B cell (primary cell): ENCODE measurements at regions of chr4 and their contacts with region 1.

Region 1: GRCh38 chr4:48008021-48008596 is 8.4 kb downstream of the CNGA1 start:
- DNase-seq: no peak
- ATAC-seq: no peak
- H3K4me3 ChIP-seq: no peak overlapping the region
- H3K4me3 Mint-ChIP-seq: no peak overlapping the region
- H3K27ac ChIP-seq: no peak overlapping the region
- H3K27ac Mint-ChIP-seq: no peak overlapping the region
- H3K4me1 ChIP-seq: no peaks in the 10 kb centered on the region
- H3K4me1 Mint-ChIP-seq: no peaks in the 10 kb centered on the region
- H3K27me3 ChIP-seq: peaks cover 0 to 8% (median 4%) of the 10 kb centered on the region in 4 experiments
- H3K27me3 Mint-ChIP-seq: peaks cover 17% of the 10 kb centered on the region
- CTCF ChIP-seq: no peak

Region 2: DNA sequence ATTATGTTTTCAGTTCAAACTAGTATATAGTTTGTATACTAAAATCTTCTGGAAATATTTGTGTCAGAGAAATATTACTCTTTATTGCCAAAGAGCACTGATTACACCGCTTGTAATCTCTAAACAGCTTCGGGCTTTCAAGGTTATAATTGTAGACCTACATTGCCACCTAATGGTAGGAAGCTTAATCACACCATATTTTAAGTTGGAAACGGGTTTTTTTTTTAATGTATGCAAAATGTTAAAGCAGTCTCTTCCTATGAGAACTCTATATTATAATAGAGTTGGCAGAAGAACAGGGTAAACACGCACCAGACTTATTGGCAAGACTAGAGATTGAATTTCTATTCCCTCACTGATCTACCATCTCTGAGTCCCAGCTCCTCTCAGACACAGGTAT is 74.3 kb before region 1 on chr4:
- CTCF ChIA-PET with region 1: no interaction called
- POLR2A ChIA-PET with region 1: no interaction called
- intact Hi-C with region 1: no loop called
- DNase-seq: peak; percentile 66
- ATAC-seq: peak; percentile 61
- H3K4me3 ChIP-seq: no peak overlapping the region
- H3K4me3 Mint-ChIP-seq: no peak overlapping the region
- H3K27ac ChIP-seq: no peak overlapping the region
- H3K27ac Mint-ChIP-seq: no peak overlapping the region
- H3K4me1 ChIP-seq: peaks cover 0 to 7% of the 10 kb centered on the region in 2 donors
- H3K4me1 Mint-ChIP-seq: peaks cover 8% of the 10 kb centered on the region
- H3K27me3 ChIP-seq: peaks cover 0 to 7% (median 0%) of the 10 kb centered on the region in 4 experiments
- H3K27me3 Mint-ChIP-seq: peaks cover 15% of the 10 kb centered on the region
- CTCF ChIP-seq: peak; percentile 87

Region 3: DNA sequence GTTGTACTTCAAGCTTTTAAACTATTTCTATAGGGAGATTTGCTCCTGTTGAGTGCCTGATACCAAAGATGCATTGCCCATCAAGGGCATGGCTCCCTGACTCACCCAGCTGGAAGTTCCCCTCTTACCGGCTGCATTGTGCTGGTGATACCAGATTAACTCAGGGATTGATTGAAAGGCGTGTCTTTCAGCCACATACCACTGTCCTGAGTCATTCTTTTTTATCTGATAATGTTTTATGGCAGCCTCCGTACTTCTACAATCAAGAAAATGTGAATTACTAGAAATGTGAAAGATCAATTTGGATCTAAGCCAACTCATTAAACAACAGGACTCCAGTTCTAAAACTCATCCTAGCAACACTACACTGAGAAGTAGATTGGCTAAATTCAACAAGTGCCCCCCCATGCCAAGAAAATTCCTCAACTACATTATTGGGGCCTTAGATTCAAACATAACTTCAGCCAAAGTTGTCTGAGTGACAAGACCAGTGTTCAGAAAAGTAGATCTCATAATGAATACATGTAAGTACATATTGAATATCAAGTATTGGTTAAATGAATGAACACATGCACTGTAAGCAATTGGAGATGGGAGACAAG is 85.9 kb after region 1 on chr4:
- CTCF ChIA-PET with region 1: interaction called, 218 read pairs
- POLR2A ChIA-PET with region 1: no interaction called
- intact Hi-C with region 1: no loop called
- DNase-seq: no peak
- ATAC-seq: no peak
- H3K4me3 ChIP-seq: no peak overlapping the region
- H3K4me3 Mint-ChIP-seq: no peak overlapping the region
- H3K27ac ChIP-seq: no peak overlapping the region
- H3K27ac Mint-ChIP-seq: no peak overlapping the region
- H3K4me1 ChIP-seq: no peaks in the 10 kb centered on the region
- H3K4me1 Mint-ChIP-seq: no peaks in the 10 kb centered on the region
- H3K27me3 ChIP-seq: no peaks in the 10 kb centered on the region
- H3K27me3 Mint-ChIP-seq: no peaks in the 10 kb centered on the region
- CTCF ChIP-seq: no peak

Region 4: GRCh38 chr4:48109413-48110263 is 101.5 kb after region 1 on chr4:
- CTCF ChIA-PET with region 1: interaction called, 9 read pairs
- POLR2A ChIA-PET with region 1: no interaction called
- intact Hi-C with region 1: loop called (anchors 1 kb)
- DNase-seq: peak; percentile 63
- ATAC-seq: peak; percentile 66
- H3K4me3 ChIP-seq: no peak overlapping the region
- H3K4me3 Mint-ChIP-seq: no peak overlapping the region
- H3K27ac ChIP-seq: no peak overlapping the region
- H3K27ac Mint-ChIP-seq: no peak overlapping the region
- H3K4me1 ChIP-seq: no peaks in the 10 kb centered on the region
- H3K4me1 Mint-ChIP-seq: no peaks in the 10 kb centered on the region
- H3K27me3 ChIP-seq: no peaks in the 10 kb centered on the region
- H3K27me3 Mint-ChIP-seq: no peaks in the 10 kb centered on the region
- CTCF ChIP-seq: peak; percentile 70

Region 5: GRCh38 chr4:48518143-48518542 is 510.0 kb after region 1 on chr4:
- CTCF ChIA-PET with region 1: no interaction called
- POLR2A ChIA-PET with region 1: no interaction called
- intact Hi-C with region 1: no loop called
- DNase-seq: no peak
- ATAC-seq: no peak
- H3K4me3 ChIP-seq: no peak overlapping the region
- H3K4me3 Mint-ChIP-seq: no peak overlapping the region
- H3K27ac ChIP-seq: no peak overlapping the region
- H3K27ac Mint-ChIP-seq: no peak overlapping the region
- H3K4me1 ChIP-seq: no peaks in the 10 kb centered on the region
- H3K4me1 Mint-ChIP-seq: no peaks in the 10 kb centered on the region
- H3K27me3 ChIP-seq: no peaks in the 10 kb centered on the region
- H3K27me3 Mint-ChIP-seq: no peaks in the 10 kb centered on the region
- CTCF ChIP-seq: no peak